Transverse colon (tissue), 4 donors: ENCODE measurements at regions of chr1 and their contacts with region 1.

Region 1: GRCh38 chr1:35243691-35244090 is 24.8 kb upstream of the ZMYM4 start:
- DNase-seq: peak; percentile 18
- H3K4me3 ChIP-seq: no peak overlapping the region
- H3K27ac ChIP-seq: no peak overlapping the region
- H3K4me1 ChIP-seq: no peaks in the 10 kb centered on the region
- H3K27me3 ChIP-seq: no peaks in the 10 kb centered on the region
- CTCF ChIP-seq: no peak
- EP300 ChIP-seq: no peak
- POLR2A ChIP-seq: no peak

Region 2: GRCh38 chr1:35184495-35185199 is 59.0 kb before region 1 on chr1:
- in situ Hi-C with region 1: no loop called
- intact Hi-C with region 1: loop called (anchors 2 kb)
- DNase-seq: no peak
- H3K4me3 ChIP-seq: no peak overlapping the region
- H3K27ac ChIP-seq: no peak overlapping the region
- H3K4me1 ChIP-seq: peaks cover 18 to 83% (median 19%) of the 10 kb centered on the region in 4 donors
- H3K27me3 ChIP-seq: no peaks in the 10 kb centered on the region
- CTCF ChIP-seq: no peak
- EP300 ChIP-seq: no peak
- POLR2A ChIP-seq: no peak

Region 3: GRCh38 chr1:35641233-35641866 is 397.7 kb after region 1 on chr1 and contains the start of gene PSMB2:
- in situ Hi-C with region 1: no loop called
- intact Hi-C with region 1: no loop called
- DNase-seq: peak; percentile 98
- H3K4me3 ChIP-seq: peak within 1 kb of the TSS; percentile 65 to 95 (median 80)
- H3K27ac ChIP-seq: peak within 1 kb of the TSS; percentile 90 to 98 (median 96)
- H3K4me1 ChIP-seq: peaks cover 22 to 51% (median 30%) of the 10 kb centered on the region in 4 donors
- H3K27me3 ChIP-seq: peaks cover 20% of the 10 kb centered on the region
- CTCF ChIP-seq: no peak
- EP300 ChIP-seq: no peak
- POLR2A ChIP-seq: peak; percentile 82
- total RNA-seq, gene PSMB2: 16.1 to 41.6 (median 29.0) TPM